ENCODE measurements at regions of chr5 and their contacts with region 1.

Region 1: GRCh38 chr5:133247881-133248624 is 196.2 kb downstream of the HSPA4 start:
- DNase-seq: no peak
- H3K4me3 ChIP-seq: no peak overlapping the region
- H3K27ac ChIP-seq: no peak overlapping the region
- H3K4me1 ChIP-seq: peaks cover 33% of the 10 kb centered on the region
- H3K27me3 ChIP-seq: no peaks in the 10 kb centered on the region
- CTCF ChIP-seq: peak in 1 of 2 donors; percentile 11

Region 2: DNA sequence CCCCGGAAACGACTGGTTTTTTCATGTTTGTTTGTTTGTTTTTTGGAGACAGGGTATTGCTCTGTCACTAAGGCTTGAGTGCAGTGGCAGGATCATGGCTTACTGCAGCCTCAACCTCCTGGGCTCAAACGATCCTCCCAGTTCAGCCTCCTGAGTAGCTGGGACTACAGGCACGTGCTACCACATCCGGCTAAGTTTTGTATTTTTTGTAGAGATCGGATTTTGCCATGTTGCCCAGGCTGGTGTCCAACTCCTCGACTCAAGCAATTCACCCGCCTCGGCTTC is 260.0 kb before region 1 on chr5:
- CTCF ChIA-PET with region 1: no interaction called
- dilution Hi-C with region 1: no loop called
- in situ Hi-C with region 1: no loop called
- intact Hi-C with region 1: no loop called
- DNase-seq: no peak
- H3K4me3 ChIP-seq: no peak overlapping the region
- H3K27ac ChIP-seq: no peak overlapping the region
- H3K4me1 ChIP-seq: no peaks in the 10 kb centered on the region
- H3K27me3 ChIP-seq: no peaks in the 10 kb centered on the region
- CTCF ChIP-seq: no peak

Region 3: DNA sequence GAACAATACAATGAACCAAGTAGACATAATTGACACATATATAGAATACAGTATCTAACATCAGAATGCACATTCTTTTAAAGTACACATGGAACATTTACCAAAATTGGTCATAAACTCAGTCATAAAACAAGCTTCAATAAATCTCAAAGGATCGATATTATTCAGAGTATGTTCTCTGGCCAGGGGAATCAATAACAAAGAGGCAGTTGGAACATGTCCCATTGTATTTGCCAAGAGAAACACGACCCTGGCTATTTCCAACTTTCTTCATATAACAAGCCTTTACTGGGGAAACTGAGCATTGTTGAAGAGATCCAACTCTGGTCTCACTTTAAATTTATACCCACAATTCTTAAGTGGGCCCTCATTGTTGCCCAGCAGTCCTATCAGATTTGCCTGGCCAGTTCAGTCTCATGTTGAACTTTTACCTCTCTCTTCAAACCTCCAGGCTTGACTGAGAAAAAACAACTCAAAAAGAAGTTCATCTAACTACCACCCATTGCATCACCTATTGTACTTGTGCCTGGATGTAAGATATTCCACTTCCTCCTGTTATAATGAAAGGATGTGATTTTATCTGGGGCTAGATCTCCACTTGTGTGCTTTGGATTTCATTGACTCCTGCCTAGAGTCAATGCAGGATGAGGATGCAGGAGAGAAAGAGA is 33.8 kb before region 1 on chr5:
- CTCF ChIA-PET with region 1: no interaction called
- dilution Hi-C with region 1: loop called (anchors 5 kb)
- in situ Hi-C with region 1: no loop called
- intact Hi-C with region 1: no loop called
- DNase-seq: no peak
- H3K4me3 ChIP-seq: no peak overlapping the region
- H3K27ac ChIP-seq: no peak overlapping the region
- H3K4me1 ChIP-seq: no peaks in the 10 kb centered on the region
- H3K27me3 ChIP-seq: no peaks in the 10 kb centered on the region
- CTCF ChIP-seq: no peak

Region 4: DNA sequence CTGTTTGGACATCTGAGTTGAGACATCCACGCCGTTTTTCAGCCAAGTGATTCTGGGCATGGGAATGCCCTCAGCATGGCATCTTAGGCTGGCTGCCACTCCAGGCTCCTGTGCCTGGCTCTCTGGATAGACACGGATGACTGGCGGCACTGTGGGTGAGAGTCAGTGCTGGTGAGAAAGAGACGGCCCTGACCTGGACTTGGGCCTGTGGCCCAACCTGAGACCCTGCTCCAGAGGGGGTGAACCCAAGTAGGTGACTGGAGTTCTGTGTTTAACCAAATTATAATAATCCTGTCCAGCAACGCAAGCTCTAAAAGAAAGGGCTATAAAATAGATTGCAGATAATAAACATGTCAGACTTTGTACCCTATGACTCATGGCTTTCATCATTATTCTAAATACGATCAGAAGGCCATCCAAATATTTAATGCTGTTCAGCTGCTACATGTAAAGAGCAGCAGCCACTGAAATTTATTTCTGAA is 22.3 kb before region 1 on chr5:
- CTCF ChIA-PET with region 1: interaction called, 3 read pairs
- dilution Hi-C with region 1: no loop called
- in situ Hi-C with region 1: no loop called
- intact Hi-C with region 1: loop called (anchors 1 kb)
- DNase-seq: peak; percentile 48
- H3K4me3 ChIP-seq: no peak overlapping the region
- H3K27ac ChIP-seq: peak overlapping the region; percentile 94
- H3K4me1 ChIP-seq: peaks cover 60% of the 10 kb centered on the region
- H3K27me3 ChIP-seq: no peaks in the 10 kb centered on the region
- CTCF ChIP-seq: no peak

Region 5: DNA sequence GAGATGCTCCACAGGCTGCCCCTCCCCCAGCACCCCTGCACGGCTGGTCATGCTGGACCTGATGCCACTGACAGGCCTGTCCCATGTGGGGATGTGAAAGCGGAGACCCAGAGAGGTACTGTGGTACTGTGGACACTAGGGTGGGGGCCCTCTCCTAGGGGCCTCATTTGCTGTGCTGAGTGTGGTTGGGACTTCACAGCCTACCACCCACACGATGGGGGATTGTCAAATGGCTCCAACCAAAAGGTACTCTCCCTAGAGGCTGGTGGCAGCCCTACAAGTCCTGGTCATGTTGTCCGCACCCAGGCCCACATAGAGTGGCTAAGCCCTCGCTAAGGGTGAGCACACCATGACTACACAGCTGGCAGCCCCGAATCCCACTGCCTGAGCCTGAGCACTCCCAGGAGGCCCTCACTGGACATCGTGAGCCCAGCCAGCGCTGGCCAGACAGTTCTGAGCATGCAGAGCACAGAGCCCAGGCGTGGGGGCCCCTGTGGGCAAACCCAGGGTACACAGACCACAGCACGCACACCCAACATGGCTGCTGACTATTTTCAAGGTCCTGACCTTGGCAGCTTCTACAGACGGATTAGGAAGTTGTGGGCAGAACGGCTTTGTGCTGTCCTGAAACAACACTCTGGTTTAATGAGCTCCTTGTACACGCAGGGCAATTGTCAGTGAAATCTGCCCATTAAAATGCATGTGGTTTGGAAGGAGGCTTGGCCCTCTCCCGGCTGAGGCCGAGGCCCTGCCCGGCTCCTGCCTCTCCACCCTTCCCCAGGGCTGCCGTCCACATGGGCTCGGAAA is 17.9 kb after region 1 on chr5:
- CTCF ChIA-PET with region 1: no interaction called
- dilution Hi-C with region 1: no loop called
- in situ Hi-C with region 1: no loop called
- intact Hi-C with region 1: no loop called
- DNase-seq: no peak
- H3K4me3 ChIP-seq: no peak overlapping the region
- H3K27ac ChIP-seq: no peak overlapping the region
- H3K4me1 ChIP-seq: no peaks in the 10 kb centered on the region
- H3K27me3 ChIP-seq: no peaks in the 10 kb centered on the region
- CTCF ChIP-seq: no peak

Region 6: DNA sequence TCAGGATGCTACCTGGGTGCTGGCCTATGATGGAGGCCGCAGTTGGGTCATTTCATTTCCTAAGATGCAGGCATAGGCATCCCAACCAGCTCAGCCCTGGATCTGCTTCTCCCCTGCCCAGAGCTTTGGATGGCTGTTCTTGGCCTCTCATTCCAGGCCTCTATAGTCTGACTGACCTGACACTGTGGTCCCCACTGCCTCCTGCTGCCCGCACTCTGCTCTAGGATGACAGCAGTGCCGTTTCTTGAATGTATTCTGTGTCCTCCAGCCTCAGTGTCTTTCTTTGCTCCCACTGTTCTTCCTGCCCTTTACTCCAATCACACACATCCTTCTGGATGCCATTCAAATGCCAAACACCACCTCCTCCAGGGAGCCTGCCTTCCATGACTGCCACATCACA is 39.4 kb after region 1 on chr5:
- CTCF ChIA-PET with region 1: no interaction called
- dilution Hi-C with region 1: no loop called
- in situ Hi-C with region 1: no loop called
- intact Hi-C with region 1: loop called (anchors 2 kb)
- DNase-seq: no peak
- H3K4me3 ChIP-seq: no peak overlapping the region
- H3K27ac ChIP-seq: no peak overlapping the region
- H3K4me1 ChIP-seq: peaks cover 59% of the 10 kb centered on the region
- H3K27me3 ChIP-seq: no peaks in the 10 kb centered on the region
- CTCF ChIP-seq: peak; percentile 44 to 69

Region 7: GRCh38 chr5:133565993-133566392 is 317.9 kb after region 1 on chr5:
- CTCF ChIA-PET with region 1: no interaction called
- dilution Hi-C with region 1: no loop called
- in situ Hi-C with region 1: no loop called
- intact Hi-C with region 1: loop called (anchors 5 kb)
- DNase-seq: peak; percentile 30
- H3K4me3 ChIP-seq: no peak overlapping the region
- H3K27ac ChIP-seq: no peak overlapping the region
- H3K4me1 ChIP-seq: no peaks in the 10 kb centered on the region
- H3K27me3 ChIP-seq: peaks cover 2% of the 10 kb centered on the region
- CTCF ChIP-seq: no peak

Measured in mammary epithelial cell (primary cell).